ENCODE measurements at regions of chr5 and their contacts with region 1.

Region 1: DNA sequence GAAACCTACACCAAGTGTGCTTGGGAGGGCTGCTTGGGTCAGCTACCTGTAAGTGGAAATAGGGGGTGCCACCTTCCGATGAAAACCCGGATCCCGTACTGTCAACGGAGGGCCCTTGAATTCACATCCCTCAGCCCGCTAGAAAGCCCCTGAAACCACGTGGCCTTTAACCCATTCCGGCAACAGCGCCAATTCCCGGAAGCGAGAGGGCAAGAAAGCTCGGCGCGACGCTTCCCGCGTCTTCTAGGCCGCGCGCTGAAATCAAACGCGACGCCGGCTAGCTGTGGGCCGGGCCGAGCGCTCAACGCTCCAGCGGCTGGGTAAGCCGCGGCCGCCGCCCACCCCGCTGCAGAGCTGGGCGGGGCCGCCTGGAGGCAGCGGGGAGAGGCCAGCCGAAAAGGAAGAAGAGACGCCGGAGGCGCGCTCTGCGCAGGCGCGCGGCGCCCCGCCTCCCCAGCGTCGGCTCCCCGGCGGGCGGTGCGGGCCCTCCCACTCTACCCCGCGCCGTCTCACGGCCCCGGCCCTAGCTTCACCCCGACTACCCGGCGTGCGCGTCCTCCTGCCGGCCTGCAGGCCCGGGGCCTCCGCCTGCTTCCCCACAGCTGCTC is at the start of gene KIF2A:
- H3K4me3 Mint-ChIP-seq: peak within 1 kb of the TSS; percentile 89
- H3K27ac Mint-ChIP-seq: peak within 1 kb of the TSS; percentile 87
- H3K4me1 Mint-ChIP-seq: peaks cover 30% of the 10 kb centered on the region
- H3K27me3 Mint-ChIP-seq: no peaks in the 10 kb centered on the region

Region 2: GRCh38 chr5:60944904-60945812 is 1360.7 kb before region 1 on chr5 and contains the starts of genes ERCC8 and NDUFAF2:
- intact Hi-C with region 1: loop called (anchors 5 kb)
- H3K4me3 Mint-ChIP-seq: no peak within 1 kb of the TSS
- H3K27ac Mint-ChIP-seq: no peak within 1 kb of the TSS
- H3K4me1 Mint-ChIP-seq: peaks cover 7% of the 10 kb centered on the region
- H3K27me3 Mint-ChIP-seq: no peaks in the 10 kb centered on the region

Region 3: DNA sequence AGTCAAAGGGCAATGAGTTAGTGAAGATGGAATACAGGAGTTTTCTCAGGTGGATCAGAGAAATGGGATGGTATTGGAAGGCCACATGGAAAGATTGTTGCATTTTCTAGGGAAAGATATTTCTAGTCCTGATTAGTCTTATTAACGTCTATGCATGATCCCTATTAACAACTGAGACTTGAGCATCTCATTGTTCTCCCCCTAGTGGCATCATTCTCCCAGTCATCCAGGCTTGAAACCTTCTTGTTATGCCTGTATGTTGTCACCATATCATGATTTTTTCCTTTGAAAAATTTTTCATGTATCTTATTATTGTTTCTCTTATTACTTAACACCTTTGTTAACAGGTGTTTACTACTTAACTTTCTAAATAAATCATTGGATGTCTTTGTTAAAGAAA is 34.6 kb after region 1 on chr5:
- intact Hi-C with region 1: no loop called
- H3K4me3 Mint-ChIP-seq: no peak overlapping the region
- H3K27ac Mint-ChIP-seq: no peak overlapping the region
- H3K4me1 Mint-ChIP-seq: peaks cover 7% of the 10 kb centered on the region
- H3K27me3 Mint-ChIP-seq: no peaks in the 10 kb centered on the region

Region 4: DNA sequence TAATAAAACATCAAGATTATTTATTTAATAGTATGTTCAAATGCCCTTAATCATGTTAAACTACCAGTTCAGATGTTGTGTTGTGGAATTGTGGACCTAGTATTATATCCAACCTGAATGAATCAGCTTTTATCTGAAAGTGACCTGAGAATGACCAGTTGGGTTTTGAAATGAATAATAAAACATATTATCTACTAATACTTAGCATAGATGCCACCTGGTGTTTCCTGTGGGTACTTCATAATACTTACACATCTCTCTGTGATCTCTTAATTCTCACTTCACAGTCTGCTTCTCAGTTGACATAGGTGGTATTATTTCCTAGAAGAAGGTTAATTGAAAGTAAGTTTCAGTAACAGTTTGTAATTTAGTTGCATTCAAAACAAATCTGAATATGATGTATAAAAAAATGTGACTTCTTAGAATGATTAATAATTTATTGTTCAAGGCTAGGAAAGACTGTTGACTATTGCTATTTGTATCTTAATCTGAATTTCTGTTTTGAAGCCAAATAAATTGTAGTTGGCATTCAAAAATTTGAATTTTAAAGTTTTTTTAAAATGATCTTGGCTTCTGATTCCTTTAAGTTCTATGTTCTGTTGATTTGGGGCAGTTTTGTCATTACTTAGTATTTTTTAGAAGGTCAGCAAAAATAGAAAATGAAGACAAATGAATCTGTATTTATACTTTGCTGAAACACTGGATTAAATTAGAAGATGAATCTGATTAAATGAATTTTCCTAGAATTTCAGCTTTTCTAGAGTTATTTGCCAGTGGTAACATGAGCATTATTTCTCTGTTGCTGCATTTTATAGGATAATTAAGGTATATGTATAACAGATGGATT is 48.4 kb after region 1 on chr5:
- intact Hi-C with region 1: loop called (anchors 5 kb)
- H3K4me3 Mint-ChIP-seq: no peak overlapping the region
- H3K27ac Mint-ChIP-seq: no peak overlapping the region
- H3K4me1 Mint-ChIP-seq: no peaks in the 10 kb centered on the region
- H3K27me3 Mint-ChIP-seq: no peaks in the 10 kb centered on the region

Region 5: DNA sequence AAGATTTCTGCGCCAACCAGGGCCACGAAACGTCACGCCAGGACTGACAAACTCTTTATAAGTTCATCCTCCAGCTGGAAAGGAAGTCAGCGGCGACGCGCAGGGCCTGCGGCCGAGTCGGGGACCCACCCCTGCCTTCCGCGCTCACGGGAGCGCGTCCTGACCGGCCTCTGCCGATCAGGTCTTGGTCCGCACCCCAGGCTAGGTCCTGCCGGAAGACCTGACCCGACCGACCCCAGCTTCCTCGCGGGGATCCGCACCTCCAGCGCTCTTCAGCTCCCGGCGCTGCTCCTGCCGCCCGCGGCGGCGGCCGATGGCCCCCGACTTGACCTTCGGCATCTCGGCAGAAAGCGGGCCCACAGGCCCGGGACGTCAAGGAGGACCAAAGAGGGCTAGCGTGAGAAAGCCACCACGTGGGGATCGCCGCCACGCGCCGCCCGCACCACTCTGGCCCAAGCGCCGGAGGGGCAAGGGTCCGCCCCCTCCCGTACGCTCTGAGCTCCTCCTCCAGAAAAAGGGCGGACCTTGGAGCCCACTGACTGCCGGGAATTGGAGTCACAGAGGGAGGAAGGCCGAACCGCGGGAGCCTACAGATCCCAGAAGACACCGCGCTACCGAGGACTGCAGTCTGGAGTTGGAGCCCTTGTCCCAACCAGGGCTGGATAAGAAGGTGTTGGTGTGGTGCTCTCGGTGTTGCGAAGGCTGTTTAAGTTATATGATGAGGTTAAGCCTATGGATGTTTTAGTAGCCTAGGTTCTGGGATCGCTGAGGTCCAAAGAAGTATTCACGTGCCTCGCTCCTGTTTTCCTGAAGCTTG is 97.8 kb after region 1 on chr5 and contains the start of gene DIMT1:
- intact Hi-C with region 1: loop called (anchors 2 kb)
- H3K4me3 Mint-ChIP-seq: peak within 1 kb of the TSS; percentile 87
- H3K27ac Mint-ChIP-seq: peak within 1 kb of the TSS; percentile 96
- H3K4me1 Mint-ChIP-seq: peaks cover 21% of the 10 kb centered on the region
- H3K27me3 Mint-ChIP-seq: no peaks in the 10 kb centered on the region

Region 6: DNA sequence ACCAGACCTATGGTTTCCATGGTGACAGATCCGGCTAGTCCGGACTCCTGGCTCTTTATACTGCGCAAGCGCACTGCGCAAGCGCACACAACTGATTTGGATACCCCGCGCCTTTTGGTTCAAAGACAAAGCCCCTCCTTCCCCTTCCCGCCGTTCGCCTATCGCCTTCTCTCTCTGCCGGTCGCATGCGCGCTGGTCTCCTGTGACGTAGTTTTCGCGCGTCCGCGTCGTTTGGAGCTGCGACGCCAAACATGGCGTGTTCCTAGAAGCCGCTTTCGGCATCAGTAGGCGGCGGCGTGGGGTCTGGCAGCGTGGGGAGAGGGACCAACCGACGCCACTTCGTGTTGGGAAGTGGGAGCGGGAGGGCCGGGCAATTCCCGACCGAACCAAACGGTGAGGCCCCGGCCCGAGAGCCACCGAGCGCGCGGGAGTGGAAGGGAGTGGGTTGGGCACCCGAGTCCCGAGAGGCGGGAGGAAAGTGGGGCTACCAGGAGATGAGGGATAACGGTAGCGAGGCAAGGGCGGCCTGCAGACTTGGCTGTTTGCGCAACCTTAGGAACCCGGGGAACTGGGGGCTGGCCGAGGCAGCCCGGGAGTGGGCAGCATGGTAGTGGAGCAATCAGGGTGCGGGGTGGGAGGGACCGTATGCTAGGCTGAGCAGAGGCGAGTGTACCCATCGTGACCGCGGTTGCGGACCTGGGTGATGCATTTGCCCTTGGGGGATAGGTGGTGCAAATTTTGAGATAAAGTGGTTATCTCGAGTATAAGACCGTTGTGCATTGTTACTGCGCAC is 106.9 kb after region 1 on chr5 and contains the start of gene IPO11:
- intact Hi-C with region 1: loop called (anchors 1 kb)
- H3K4me3 Mint-ChIP-seq: peak within 1 kb of the TSS; percentile 91
- H3K27ac Mint-ChIP-seq: peak within 1 kb of the TSS; percentile 88
- H3K4me1 Mint-ChIP-seq: peaks cover 16% of the 10 kb centered on the region
- H3K27me3 Mint-ChIP-seq: peaks cover 3% of the 10 kb centered on the region